ENCODE measurements at regions of chrX and their contacts with region 1.

Region 1: DNA sequence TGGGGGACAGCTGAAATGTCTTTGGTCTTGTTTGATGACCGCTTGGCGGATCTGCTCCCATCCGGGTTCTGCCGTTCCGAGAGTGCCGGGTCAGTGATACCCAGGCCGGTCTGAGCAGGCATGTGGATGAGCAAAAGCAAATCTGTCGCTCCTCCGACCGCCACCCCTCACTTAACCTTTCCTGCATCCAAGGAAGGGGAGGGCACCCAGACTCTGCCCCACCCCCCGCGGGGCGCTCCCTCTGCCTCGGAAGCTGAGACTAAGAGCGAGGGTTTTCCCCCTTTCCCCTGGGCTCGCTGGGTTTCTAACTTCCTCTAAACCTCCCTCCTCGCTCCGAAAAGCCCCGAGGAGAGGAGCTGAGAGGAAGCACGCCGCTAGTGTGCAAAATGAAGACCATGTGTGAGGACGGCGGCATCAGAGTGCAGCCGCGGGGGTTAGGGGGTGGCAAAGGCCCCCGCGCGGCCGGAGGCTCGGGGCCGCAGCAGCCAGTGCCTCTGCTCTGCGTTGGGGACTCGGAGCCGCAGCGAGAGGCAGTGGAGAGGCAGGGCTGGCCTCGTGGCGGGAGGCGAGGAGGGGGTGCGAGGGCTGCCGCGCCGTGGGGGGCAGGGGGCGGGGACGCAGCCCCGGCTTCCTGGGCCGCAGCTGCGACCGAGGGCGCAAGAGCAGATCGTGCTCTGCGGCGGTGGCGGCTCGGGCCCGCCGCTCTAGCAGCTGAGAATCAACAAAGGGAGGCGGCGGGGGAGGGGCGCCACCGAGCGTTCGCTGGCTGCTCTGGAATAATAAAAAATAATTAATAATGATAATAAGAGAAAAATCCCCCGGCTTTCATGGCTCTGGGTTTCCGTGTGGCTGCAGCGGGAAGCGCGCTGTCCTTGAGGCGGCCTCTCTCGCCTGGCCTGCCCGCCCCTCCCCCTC is 55.8 kb upstream of the BCOR start:
- DNase-seq: peak in 4 of 5 donors; percentile 44 to 83 (median 54)
- H3K4me3 ChIP-seq: peak overlapping the region; percentile 3 to 50
- H3K4me3 Mint-ChIP-seq: peak overlapping the region; percentile 81 to 92 (median 84)
- H3K27ac ChIP-seq: no peak overlapping the region
- H3K27ac Mint-ChIP-seq: peak overlapping the region; percentile 12 to 79 (median 60)
- H3K4me1 ChIP-seq: peaks cover under 1% of the 10 kb centered on the region
- H3K4me1 Mint-ChIP-seq: peaks cover 1 to 18% (median 11%) of the 10 kb centered on the region in 4 donors
- H3K27me3 ChIP-seq: no peaks in the 10 kb centered on the region
- H3K27me3 Mint-ChIP-seq: no peaks in the 10 kb centered on the region

Region 2: DNA sequence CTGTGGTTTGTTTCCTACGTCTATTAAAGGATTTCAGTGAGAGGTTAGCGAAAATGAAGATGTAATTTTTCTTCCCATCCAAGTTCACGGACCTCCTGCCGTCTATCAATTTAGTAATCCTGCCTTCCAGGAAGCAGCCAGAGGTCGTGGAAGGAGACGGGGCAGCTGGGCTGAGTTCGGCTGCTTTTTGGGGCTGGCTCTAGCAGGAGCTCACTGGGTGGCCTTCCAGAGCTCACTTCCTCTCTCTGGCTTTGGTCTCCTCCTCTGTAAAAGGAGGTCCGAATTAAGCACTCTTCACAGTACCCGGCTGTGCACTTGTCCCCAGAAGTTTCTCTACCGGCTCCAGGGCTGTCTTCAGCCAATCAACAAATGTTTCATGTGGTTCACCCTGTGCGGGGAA is 351.2 kb before region 1 on chrX:
- CTCF ChIA-PET with region 1: no interaction called
- POLR2A ChIA-PET with region 1: no interaction called
- intact Hi-C with region 1: no loop called
- DNase-seq: no peak
- H3K4me3 ChIP-seq: no peak overlapping the region
- H3K4me3 Mint-ChIP-seq: no peak overlapping the region
- H3K27ac ChIP-seq: no peak overlapping the region
- H3K27ac Mint-ChIP-seq: no peak overlapping the region
- H3K4me1 ChIP-seq: no peaks in the 10 kb centered on the region
- H3K4me1 Mint-ChIP-seq: no peaks in the 10 kb centered on the region
- H3K27me3 ChIP-seq: no peaks in the 10 kb centered on the region
- H3K27me3 Mint-ChIP-seq: no peaks in the 10 kb centered on the region

Region 3: GRCh38 chrX:40013266-40014195 is 140.1 kb before region 1 on chrX:
- CTCF ChIA-PET with region 1: no interaction called
- POLR2A ChIA-PET with region 1: no interaction called
- intact Hi-C with region 1: loop called (anchors 5 kb)
- DNase-seq: peak in 2 of 5 donors; percentile 28 to 31
- H3K4me3 ChIP-seq: peak overlapping the region in 1 of 2 donors; percentile 49
- H3K4me3 Mint-ChIP-seq: peak overlapping the region; percentile 64 to 84 (median 78)
- H3K27ac ChIP-seq: no peak overlapping the region
- H3K27ac Mint-ChIP-seq: peak overlapping the region in 2 of 7 donors; percentile 40 to 60
- H3K4me1 ChIP-seq: peaks cover 22% of the 10 kb centered on the region
- H3K4me1 Mint-ChIP-seq: peaks cover 4 to 26% (median 16%) of the 10 kb centered on the region in 4 donors
- H3K27me3 ChIP-seq: no peaks in the 10 kb centered on the region
- H3K27me3 Mint-ChIP-seq: peaks cover 3 to 5% of the 10 kb centered on the region in 2 donors

Region 4: GRCh38 chrX:40108959-40109287 is 44.7 kb before region 1 on chrX:
- CTCF ChIA-PET with region 1: interaction called, 3 read pairs
- POLR2A ChIA-PET with region 1: interaction called, 18 read pairs
- intact Hi-C with region 1: loop called (anchors 2 kb)
- DNase-seq: peak; percentile 57 to 72 (median 60)
- H3K4me3 ChIP-seq: peak overlapping the region in 1 of 2 donors; percentile 19
- H3K4me3 Mint-ChIP-seq: peak overlapping the region in 4 of 8 donors; percentile 60 to 75 (median 66)
- H3K27ac ChIP-seq: no peak overlapping the region
- H3K27ac Mint-ChIP-seq: no peak overlapping the region
- H3K4me1 ChIP-seq: peaks cover 20% of the 10 kb centered on the region
- H3K4me1 Mint-ChIP-seq: peaks cover 3 to 18% (median 12%) of the 10 kb centered on the region in 4 donors
- H3K27me3 ChIP-seq: no peaks in the 10 kb centered on the region
- H3K27me3 Mint-ChIP-seq: no peaks in the 10 kb centered on the region

Region 5: DNA sequence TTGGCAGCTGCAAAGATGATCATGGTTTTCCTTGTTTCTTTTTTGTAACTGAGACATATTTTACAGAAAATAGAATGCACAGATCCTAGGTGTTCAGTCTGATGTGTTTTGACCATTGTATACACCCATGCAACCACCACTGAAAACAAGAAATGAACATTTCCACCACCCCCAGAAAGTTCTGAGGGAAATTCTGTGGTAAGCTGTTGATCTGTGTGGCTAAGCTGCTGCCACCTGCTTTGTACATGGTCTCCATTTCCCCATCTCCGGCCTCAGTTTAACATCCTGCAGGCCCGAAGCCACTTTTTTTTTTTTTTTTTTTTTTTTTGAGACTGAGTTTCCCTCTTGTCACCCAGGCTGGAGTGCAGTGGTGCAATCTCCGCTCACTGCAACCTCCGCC is 1358.8 kb after region 1 on chrX:
- CTCF ChIA-PET with region 1: no interaction called
- POLR2A ChIA-PET with region 1: no interaction called
- intact Hi-C with region 1: no loop called
- DNase-seq: no peak
- H3K4me3 ChIP-seq: no peak overlapping the region
- H3K4me3 Mint-ChIP-seq: peak overlapping the region in 2 of 8 donors; percentile 17 to 31
- H3K27ac ChIP-seq: no peak overlapping the region
- H3K27ac Mint-ChIP-seq: peak overlapping the region in 3 of 7 donors; percentile 42 to 83 (median 79)
- H3K4me1 ChIP-seq: peaks cover 6% of the 10 kb centered on the region
- H3K4me1 Mint-ChIP-seq: peaks cover 4 to 23% (median 16%) of the 10 kb centered on the region in 4 donors
- H3K27me3 ChIP-seq: no peaks in the 10 kb centered on the region
- H3K27me3 Mint-ChIP-seq: no peaks in the 10 kb centered on the region